ENCODE measurements at regions of chr19 and their contacts with region 1.

Region 1: GRCh38 chr19:45692187-45693105 is at the start of gene QPCTL:
- DNase-seq: peak; percentile 97
- ATAC-seq: peak; percentile 96
- total RNA-seq, gene QPCTL: 10.9 TPM

Region 2: GRCh38 chr19:45638930-45639729 is 53.3 kb before region 1 on chr19 and contains the start of gene EML2:
- intact Hi-C with region 1: no loop called
- DNase-seq: peak; percentile 67
- ATAC-seq: peak; percentile 41
- total RNA-seq, gene EML2: 43.3 TPM

Region 3: GRCh38 chr19:45768984-45769782 is 76.7 kb after region 1 on chr19 and contains the start of gene SIX5:
- intact Hi-C with region 1: loop called (anchors 10 kb)
- DNase-seq: peak; percentile 100
- ATAC-seq: peak; percentile 74
- total RNA-seq, gene SIX5: 26.3 TPM

Measured in sciatic nerve (tissue), 2 donors.